ENCODE measurements at regions of chr1 and their contacts with region 1.

Region 1: GRCh38 chr1:155135415-155136028 is at the start of gene SLC50A1:
- DNase-seq: peak; percentile 97
- ATAC-seq: peak; percentile 78
- H3K4me3 Mint-ChIP-seq: peak within 1 kb of the TSS; percentile 96
- H3K27ac Mint-ChIP-seq: peak within 1 kb of the TSS; percentile 97
- H3K4me1 Mint-ChIP-seq: peaks cover 35% of the 10 kb centered on the region
- H3K27me3 Mint-ChIP-seq: no peaks in the 10 kb centered on the region
- total RNA-seq, gene SLC50A1: 50.2 to 58.0 TPM

Region 2: DNA sequence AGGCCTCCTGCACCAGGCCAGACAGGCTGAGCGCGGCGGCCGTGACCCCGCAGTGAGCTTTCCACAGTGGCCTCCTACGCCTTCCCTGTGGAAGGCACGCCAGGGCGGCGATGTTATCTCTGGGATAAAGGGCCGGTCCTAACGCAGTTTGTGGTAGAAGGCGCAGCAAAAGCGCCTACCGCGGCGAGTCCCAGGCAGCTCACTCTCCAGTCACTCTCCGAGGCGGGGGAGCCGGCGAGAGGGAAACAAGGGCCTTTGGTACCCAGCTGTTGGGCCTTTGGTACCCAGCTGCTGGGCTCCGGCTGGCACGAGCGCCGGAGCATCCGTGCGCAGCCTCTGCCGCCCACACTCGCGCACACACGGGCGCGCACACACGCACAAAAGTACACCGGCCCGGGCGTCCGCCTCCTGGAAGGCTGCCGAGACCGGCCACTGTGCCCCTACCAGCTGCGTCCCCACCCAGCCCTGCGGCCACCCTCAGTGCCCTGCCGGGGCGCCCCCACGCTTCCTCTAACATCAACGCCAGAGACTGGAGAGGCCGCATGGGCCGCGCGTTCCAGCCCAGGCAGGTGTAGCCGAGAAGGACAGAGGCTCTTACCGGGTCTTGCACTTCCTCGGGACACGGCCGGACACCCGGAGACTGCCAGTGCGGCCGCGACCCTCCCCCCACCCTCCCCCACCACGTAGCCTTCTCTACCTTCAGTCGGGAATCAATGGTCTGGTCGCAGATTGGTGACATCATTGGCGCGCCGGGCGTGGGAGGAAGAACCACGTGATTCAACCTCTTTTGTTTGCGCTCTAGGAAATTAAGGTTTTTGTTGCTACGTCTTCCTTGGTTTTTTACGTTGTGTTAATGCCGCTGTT is 508.0 kb before region 1 on chr1:
- CTCF ChIA-PET with region 1: no interaction called
- POLR2A ChIA-PET with region 1: no interaction called
- intact Hi-C with region 1: loop called in 1 of 2 experiments (anchors 5 kb)
- DNase-seq: peak; percentile 96
- ATAC-seq: peak; percentile 74
- H3K4me3 Mint-ChIP-seq: peak overlapping the region; percentile 99
- H3K27ac Mint-ChIP-seq: peak overlapping the region; percentile 100
- H3K4me1 Mint-ChIP-seq: peaks cover 47% of the 10 kb centered on the region
- H3K27me3 Mint-ChIP-seq: peaks cover 1% of the 10 kb centered on the region

Region 3: DNA sequence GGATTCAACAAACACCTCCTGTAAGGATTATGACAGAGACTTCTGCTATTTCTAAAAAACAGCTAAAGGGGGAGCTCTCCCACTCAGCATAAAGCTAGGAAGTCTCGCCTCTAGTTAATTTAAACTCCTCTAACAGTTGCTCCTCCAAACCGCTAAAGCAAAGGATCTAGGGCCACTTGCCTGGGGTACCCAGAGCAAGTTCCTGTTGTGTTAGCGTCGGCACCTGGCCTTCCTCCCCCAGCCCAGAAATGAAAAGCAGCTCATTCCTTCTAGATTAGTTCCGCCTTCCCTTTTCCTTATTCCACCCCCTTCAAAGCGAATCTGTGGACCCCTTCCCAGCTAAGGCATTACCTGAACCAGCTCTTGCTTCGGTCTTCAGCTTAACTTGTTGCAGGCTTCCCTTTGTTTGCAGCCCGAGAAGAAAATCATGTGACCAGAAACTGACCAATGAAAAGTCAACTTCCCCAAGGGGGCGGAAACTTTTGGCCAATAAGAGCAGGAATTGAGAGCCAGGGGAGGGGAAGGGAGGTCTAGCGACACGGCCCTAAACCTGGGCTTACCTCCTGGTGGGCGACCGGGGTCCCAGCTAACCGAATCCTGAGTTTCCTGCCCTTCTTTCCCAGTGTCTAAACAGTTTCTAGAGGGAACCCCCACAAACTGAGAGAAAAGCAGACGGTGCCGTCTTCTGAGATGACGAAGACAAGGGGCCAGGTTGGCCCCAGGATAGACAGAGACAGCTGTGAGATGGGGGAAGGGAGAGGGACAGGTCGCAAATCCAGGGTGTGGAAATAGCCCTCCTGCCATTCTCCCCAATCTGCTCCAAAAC is 179.6 kb before region 1 on chr1 and contains the start of gene PBXIP1:
- CTCF ChIA-PET with region 1: no interaction called
- POLR2A ChIA-PET with region 1: no interaction called
- intact Hi-C with region 1: loop called in 1 of 2 experiments (anchors 5 kb)
- DNase-seq: peak; percentile 83
- ATAC-seq: peak; percentile 54
- H3K4me3 Mint-ChIP-seq: peak within 1 kb of the TSS; percentile 85
- H3K27ac Mint-ChIP-seq: peak within 1 kb of the TSS; percentile 95
- H3K4me1 Mint-ChIP-seq: peaks cover 82% of the 10 kb centered on the region
- H3K27me3 Mint-ChIP-seq: no peaks in the 10 kb centered on the region
- total RNA-seq, gene PBXIP1: 22.6 to 28.1 TPM

Region 4: GRCh38 chr1:155044812-155045690 is 90.5 kb before region 1 on chr1:
- CTCF ChIA-PET with region 1: no interaction called
- POLR2A ChIA-PET with region 1: no interaction called
- intact Hi-C with region 1: no loop called
- DNase-seq: peak; percentile 81
- ATAC-seq: peak; percentile 98
- H3K4me3 Mint-ChIP-seq: no peak overlapping the region
- H3K27ac Mint-ChIP-seq: no peak overlapping the region
- H3K4me1 Mint-ChIP-seq: peaks cover 16% of the 10 kb centered on the region
- H3K27me3 Mint-ChIP-seq: no peaks in the 10 kb centered on the region

Region 5: DNA sequence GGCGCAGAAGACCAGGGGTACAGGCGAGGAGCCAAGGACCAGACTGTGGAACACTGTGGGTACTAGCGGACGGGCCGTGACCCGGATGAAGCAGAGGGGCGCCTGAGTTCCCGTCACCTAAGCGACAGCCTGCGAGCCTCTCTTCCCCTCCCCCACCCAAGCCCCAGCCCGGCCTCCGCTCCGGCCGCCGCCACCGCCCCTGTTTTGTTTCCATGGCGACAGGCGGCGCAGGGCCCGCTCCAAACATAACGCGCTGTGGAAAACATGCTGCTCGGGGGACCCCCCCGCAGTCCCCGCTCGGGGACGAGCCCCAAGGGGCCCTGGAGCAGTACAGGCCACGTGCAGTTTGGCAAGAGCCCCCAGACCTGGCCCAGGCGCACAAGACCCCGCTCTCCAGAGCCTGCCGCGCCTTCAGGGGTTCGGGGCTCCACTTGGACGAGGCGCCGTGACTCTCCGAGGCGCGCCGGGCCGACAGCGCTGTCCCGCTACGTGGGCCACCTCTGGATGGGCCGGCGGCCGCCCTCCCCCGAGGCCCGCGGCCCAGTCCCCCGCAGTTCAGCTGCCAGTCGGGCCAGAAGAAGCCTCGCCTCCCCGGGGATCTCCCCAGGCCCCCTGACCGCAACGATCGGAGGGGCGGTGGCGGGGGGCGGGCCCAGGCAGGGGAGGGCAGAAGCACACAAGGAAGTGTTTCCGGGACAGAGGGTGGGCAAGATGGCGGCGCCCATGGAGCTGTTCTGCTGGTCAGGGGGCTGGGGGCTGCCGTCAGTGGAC is 73.2 kb after region 1 on chr1 and contains the start of gene MTX1:
- CTCF ChIA-PET with region 1: interaction called, 4 read pairs
- POLR2A ChIA-PET with region 1: no interaction called
- intact Hi-C with region 1: loop called in 1 of 2 experiments (anchors 1 kb)
- DNase-seq: peak; percentile 93
- ATAC-seq: peak; percentile 87
- H3K4me3 Mint-ChIP-seq: peak within 1 kb of the TSS; percentile 89
- H3K27ac Mint-ChIP-seq: peak within 1 kb of the TSS; percentile 86
- H3K4me1 Mint-ChIP-seq: peaks cover 29% of the 10 kb centered on the region
- H3K27me3 Mint-ChIP-seq: no peaks in the 10 kb centered on the region
- total RNA-seq, gene MTX1: 52.8 to 52.9 TPM

Measured in activated CD4-positive, alpha-beta T cell treated with anti-CD3 and anti-CD28 coated beads for 36 hours (primary cell).